Panc1 (cell line): ENCODE measurements at regions of chr22 and their contacts with region 1.

Region 1: GRCh38 chr22:33579448-33580093 is 340.7 kb downstream of the LARGE1 start:
- DNase-seq: peak; percentile 43
- ATAC-seq: peak; percentile 84
- H3K4me3 ChIP-seq: no peak overlapping the region
- H3K27ac ChIP-seq: no peak overlapping the region
- H3K4me1 ChIP-seq: no peaks in the 10 kb centered on the region
- H3K27me3 ChIP-seq: no peaks in the 10 kb centered on the region
- CTCF ChIP-seq: peak; percentile 81

Region 2: GRCh38 chr22:33255791-33256190 is 323.8 kb before region 1 on chr22:
- CTCF ChIA-PET with region 1: no interaction called
- POLR2A ChIA-PET with region 1: no interaction called
- in situ Hi-C with region 1: no loop called
- intact Hi-C with region 1: no loop called
- DNase-seq: no peak
- ATAC-seq: no peak
- H3K4me3 ChIP-seq: no peak overlapping the region
- H3K27ac ChIP-seq: no peak overlapping the region
- H3K4me1 ChIP-seq: no peaks in the 10 kb centered on the region
- H3K27me3 ChIP-seq: no peaks in the 10 kb centered on the region
- CTCF ChIP-seq: no peak

Region 3: DNA sequence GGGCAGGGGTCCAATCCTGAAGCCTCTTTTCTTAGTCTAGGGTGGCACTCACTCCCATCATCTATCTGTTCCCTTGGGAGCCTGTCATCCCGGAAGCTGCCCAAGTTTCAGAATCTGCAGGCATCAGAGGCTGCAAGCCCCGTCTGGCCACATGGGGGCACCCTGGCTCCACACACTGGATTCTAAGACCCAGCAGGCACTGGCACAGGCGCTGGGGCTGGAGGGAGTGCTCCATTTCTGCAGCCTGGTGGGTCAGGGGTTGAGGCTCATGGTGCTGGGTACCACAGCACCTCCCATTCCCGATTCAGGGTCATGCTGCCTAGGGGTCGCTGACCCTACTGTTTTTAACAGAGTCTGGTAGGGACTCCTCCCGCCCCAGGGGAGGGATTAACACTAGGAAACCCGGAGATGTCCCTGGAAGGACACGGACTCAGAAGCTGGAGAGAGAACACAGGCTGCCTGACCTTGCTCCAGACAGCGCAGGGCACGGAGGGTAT is 277.5 kb before region 1 on chr22:
- CTCF ChIA-PET with region 1: no interaction called
- POLR2A ChIA-PET with region 1: no interaction called
- in situ Hi-C with region 1: no loop called
- intact Hi-C with region 1: loop called (anchors 2 kb)
- DNase-seq: peak; percentile 39
- ATAC-seq: peak; percentile 92
- H3K4me3 ChIP-seq: no peak overlapping the region
- H3K27ac ChIP-seq: no peak overlapping the region
- H3K4me1 ChIP-seq: no peaks in the 10 kb centered on the region; the same call in 1 of the 2 replicates
- H3K27me3 ChIP-seq: no peaks in the 10 kb centered on the region
- CTCF ChIP-seq: peak; percentile 89